B cell (primary cell): ENCODE measurements at regions of chr3 and their contacts with region 1.

Region 1: GRCh38 chr3:183468424-183468823 is 40.0 kb upstream of the MCF2L2 start:
- DNase-seq: no peak
- ATAC-seq: no peak
- H3K4me3 ChIP-seq: no peak overlapping the region
- H3K4me3 Mint-ChIP-seq: no peak overlapping the region
- H3K27ac ChIP-seq: no peak overlapping the region
- H3K27ac Mint-ChIP-seq: no peak overlapping the region
- H3K4me1 ChIP-seq: peaks cover 0 to 7% of the 10 kb centered on the region in 2 donors
- H3K4me1 Mint-ChIP-seq: peaks cover 10% of the 10 kb centered on the region
- H3K27me3 ChIP-seq: no peaks in the 10 kb centered on the region
- H3K27me3 Mint-ChIP-seq: peaks cover 7% of the 10 kb centered on the region
- CTCF ChIP-seq: no peak

Region 2: GRCh38 chr3:183481582-183481981 is 13.2 kb after region 1 on chr3:
- CTCF ChIA-PET with region 1: interaction called, 12 read pairs
- POLR2A ChIA-PET with region 1: no interaction called
- intact Hi-C with region 1: no loop called
- DNase-seq: no peak
- ATAC-seq: no peak
- H3K4me3 ChIP-seq: no peak overlapping the region
- H3K4me3 Mint-ChIP-seq: no peak overlapping the region
- H3K27ac ChIP-seq: no peak overlapping the region
- H3K27ac Mint-ChIP-seq: no peak overlapping the region
- H3K4me1 ChIP-seq: peaks cover 0 to 5% of the 10 kb centered on the region in 2 donors
- H3K4me1 Mint-ChIP-seq: peaks cover 12% of the 10 kb centered on the region
- H3K27me3 ChIP-seq: no peaks in the 10 kb centered on the region
- H3K27me3 Mint-ChIP-seq: no peaks in the 10 kb centered on the region
- CTCF ChIP-seq: no peak

Region 3: DNA sequence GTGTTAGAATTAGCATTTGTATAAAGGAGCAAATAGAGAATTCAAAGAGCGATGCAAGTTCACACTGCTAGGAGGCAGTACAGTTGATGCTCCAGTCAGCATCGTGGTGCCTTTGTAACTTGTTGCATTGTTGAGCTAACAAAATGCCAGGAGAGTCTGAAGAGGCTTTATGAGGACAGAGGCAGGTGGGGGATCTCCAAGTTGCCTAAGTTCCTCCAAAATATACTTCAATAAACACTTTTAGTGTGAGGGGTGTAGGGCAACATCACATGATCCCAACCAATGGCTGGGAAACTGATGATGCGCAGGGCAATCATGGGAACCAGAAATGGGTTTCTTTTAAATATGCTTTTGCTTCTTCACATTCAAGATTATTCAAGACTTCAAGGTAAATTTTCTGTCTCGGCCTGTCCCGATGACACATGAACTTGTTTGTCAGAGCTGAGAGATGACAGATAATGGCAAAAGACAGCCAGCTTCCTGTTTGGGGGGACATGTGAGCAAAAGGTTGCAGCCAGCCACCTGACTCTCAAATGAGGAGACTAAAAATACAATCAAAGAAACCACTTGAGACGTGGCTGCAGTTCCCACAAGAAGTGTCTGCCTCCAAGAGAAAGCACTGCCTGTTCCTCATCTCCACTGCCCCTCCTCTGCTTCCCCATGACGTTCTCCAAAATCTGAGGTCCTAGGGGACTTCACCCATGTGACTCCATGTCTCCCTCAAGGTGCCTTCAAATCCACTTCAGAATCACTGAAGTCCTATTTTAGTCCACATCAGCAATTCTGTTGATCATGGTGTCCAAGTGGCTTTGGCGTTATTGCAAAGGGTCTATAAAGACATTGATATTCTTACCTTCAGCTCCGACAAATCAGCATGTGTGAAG is 47.8 kb after region 1 on chr3:
- CTCF ChIA-PET with region 1: interaction called, 3 read pairs
- POLR2A ChIA-PET with region 1: no interaction called
- intact Hi-C with region 1: loop called (anchors 1 kb)
- DNase-seq: peak; percentile 85
- ATAC-seq: peak; percentile 70
- H3K4me3 ChIP-seq: no peak overlapping the region
- H3K4me3 Mint-ChIP-seq: peak overlapping the region; percentile 78
- H3K27ac ChIP-seq: peak overlapping the region; percentile 53 to 86
- H3K27ac Mint-ChIP-seq: peak overlapping the region; percentile 95
- H3K4me1 ChIP-seq: peaks cover 58 to 69% of the 10 kb centered on the region in 2 donors
- H3K4me1 Mint-ChIP-seq: peaks cover 85% of the 10 kb centered on the region
- H3K27me3 ChIP-seq: no peaks in the 10 kb centered on the region
- H3K27me3 Mint-ChIP-seq: no peaks in the 10 kb centered on the region
- CTCF ChIP-seq: peak; percentile 36

Region 4: DNA sequence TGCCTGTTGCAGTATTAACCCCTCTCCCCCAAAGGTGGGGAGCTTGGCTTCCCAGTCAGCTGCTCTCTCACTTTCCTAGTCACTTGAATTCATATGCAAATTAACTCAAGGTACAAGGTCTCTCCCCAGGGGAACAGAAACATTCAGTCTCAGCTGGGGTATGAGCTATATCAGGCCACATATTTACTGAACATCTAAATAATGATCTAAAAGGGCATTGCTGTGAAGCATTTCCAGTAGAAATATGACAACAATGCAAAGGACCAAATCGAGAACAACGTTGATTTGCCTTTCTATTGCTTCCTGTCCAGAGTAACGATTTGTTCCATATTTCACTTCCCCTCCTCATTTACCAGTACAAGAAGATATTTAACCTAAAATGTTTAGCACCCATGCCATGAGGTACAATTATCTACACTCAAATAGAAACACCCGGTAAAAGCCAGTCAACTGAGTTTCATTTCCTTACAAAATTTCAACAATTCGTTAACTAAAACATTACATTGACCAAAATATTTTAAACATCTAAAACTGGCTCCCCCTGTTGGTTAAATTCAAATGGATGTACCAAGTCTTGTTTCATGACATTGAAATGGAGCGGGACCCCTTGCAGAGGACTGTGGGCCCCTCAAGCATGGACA is 123.6 kb after region 1 on chr3:
- CTCF ChIA-PET with region 1: interaction called, 14 read pairs
- POLR2A ChIA-PET with region 1: no interaction called
- intact Hi-C with region 1: no loop called
- DNase-seq: peak; percentile 77
- ATAC-seq: peak; percentile 76
- H3K4me3 ChIP-seq: peak overlapping the region in 1 of 5 experiments; percentile 16
- H3K4me3 Mint-ChIP-seq: peak overlapping the region; percentile 56
- H3K27ac ChIP-seq: no peak overlapping the region
- H3K27ac Mint-ChIP-seq: peak overlapping the region; percentile 15
- H3K4me1 ChIP-seq: peaks cover 32 to 49% of the 10 kb centered on the region in 2 donors
- H3K4me1 Mint-ChIP-seq: peaks cover 47% of the 10 kb centered on the region
- H3K27me3 ChIP-seq: peaks cover 0 to 28% (median 5%) of the 10 kb centered on the region in 4 experiments
- H3K27me3 Mint-ChIP-seq: peaks cover 15% of the 10 kb centered on the region
- CTCF ChIP-seq: peak; percentile 71

Region 5: DNA sequence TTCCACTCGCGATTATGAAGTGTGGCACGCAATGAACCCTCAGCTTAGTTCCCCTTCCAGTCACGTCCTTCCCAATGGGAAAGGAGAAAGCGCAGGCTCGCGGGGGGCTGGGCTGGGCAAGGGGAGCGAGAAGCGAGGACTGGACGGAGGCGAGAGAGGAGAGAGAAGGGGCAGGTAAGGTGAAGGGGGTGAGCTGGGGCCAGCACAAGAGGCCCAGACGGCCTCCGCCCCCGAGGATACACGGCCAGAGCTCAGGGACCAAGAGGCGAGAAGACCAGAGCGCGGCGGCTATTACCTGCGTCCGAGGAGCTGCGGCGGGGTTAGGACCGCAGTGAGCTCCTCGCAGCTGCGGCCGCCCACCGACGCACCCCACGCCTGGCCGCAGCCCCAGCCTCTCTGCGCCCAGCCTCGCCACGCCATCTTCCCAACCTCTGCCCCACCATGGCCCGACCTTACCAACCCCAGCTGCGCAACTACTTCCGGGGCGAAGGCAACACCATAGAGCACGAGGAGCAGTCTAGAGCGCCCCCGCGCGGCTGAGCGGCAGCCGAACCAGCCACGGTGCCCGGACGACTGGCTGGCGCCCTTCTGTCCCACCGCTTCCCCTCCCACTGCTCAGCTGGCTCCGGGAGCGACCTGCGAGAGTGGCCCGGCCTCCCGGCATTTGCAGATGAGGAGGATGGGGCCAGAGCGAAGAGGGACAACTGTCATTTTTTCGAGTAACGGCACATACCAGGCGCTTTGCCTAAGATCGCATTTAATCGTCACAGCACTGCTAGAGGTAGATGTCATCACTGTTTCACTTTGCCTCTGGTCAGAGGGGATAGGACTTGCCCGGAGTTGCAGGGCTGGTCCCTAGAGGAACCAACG is 416.2 kb after region 1 on chr3 and contains the start of gene PARL:
- CTCF ChIA-PET with region 1: no interaction called
- POLR2A ChIA-PET with region 1: no interaction called
- intact Hi-C with region 1: loop called (anchors 1 kb)
- DNase-seq: peak; percentile 95
- ATAC-seq: peak; percentile 100
- H3K4me3 ChIP-seq: peak within 1 kb of the TSS; percentile 68 to 96 (median 84)
- H3K4me3 Mint-ChIP-seq: peak within 1 kb of the TSS; percentile 92
- H3K27ac ChIP-seq: peak within 1 kb of the TSS; percentile 39 to 75
- H3K27ac Mint-ChIP-seq: peak within 1 kb of the TSS; percentile 94
- H3K4me1 ChIP-seq: peaks cover 11 to 19% of the 10 kb centered on the region in 2 donors
- H3K4me1 Mint-ChIP-seq: peaks cover 36% of the 10 kb centered on the region
- H3K27me3 ChIP-seq: peaks cover 0 to 6% (median 0%) of the 10 kb centered on the region in 4 experiments
- H3K27me3 Mint-ChIP-seq: peaks cover 3% of the 10 kb centered on the region
- CTCF ChIP-seq: peak; percentile 90
- total RNA-seq, gene PARL: 46.7 and 51.2 TPM in 2 replicates